HepG2 (cell line): ENCODE measurements at regions of chr9 and their contacts with region 1.

Region 1: GRCh38 chr9:16133556-16134227 is 580.8 kb downstream of the CCDC171 start:
- DNase-seq: peak; percentile 63
- ATAC-seq: peak; percentile 97
- H3K4me3 ChIP-seq: no peak overlapping the region
- H3K27ac ChIP-seq: no peak overlapping the region
- H3K4me1 ChIP-seq: no peaks in the 10 kb centered on the region
- H3K27me3 ChIP-seq: no peaks in the 10 kb centered on the region
- CTCF ChIP-seq: peak; percentile 82
- EP300 ChIP-seq: no peak
- POLR2A ChIP-seq: no peak
- RAD21 ChIP-seq: 0 out of 2 replicates have a peak, but pooled peaks have one; percentile 15

Region 2: DNA sequence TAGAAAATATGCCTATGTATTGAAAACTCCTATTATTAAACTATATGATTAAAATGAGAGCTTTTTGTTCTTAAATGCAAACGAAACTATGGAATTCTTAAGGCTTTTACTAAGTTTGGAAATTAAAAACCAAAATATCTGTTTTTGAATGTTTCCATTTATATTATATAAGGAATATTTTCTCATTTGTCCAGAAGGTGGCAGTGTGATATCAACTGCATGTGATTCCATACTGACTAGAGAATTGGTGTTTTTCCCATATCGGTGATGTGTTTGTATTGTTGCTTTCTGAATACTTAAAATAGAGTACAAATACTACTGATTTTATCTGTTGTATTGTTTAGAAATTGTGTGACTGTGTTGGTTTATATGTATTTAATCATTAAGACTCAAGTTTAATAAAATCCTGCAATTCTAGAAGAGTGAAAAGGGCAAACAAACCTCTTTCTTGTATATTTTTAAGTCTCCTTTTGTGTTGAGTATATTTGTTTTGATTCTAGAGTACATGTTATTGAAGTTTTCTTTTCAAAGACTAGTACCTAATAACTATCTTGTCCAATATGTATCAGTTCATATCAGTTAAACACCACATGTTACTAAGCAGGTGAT is 260.0 kb before region 1 on chr9:
- CTCF ChIA-PET with region 1: interaction called, 14 read pairs
- POLR2A ChIA-PET with region 1: no interaction called
- in situ Hi-C with region 1: loop called (anchors 25 kb)
- intact Hi-C with region 1: loop called (anchors 1 kb)
- DNase-seq: peak; percentile 33
- ATAC-seq: peak; percentile 59; the same call in 2 of the 3 replicates
- H3K4me3 ChIP-seq: no peak overlapping the region
- H3K27ac ChIP-seq: no peak overlapping the region
- H3K4me1 ChIP-seq: no peaks in the 10 kb centered on the region
- H3K27me3 ChIP-seq: no peaks in the 10 kb centered on the region
- CTCF ChIP-seq: peak; percentile 61
- EP300 ChIP-seq: no peak
- POLR2A ChIP-seq: no peak
- RAD21 ChIP-seq: no peak

Region 3: GRCh38 chr9:15889555-15889954 is 244.1 kb before region 1 on chr9:
- CTCF ChIA-PET with region 1: no interaction called
- POLR2A ChIA-PET with region 1: no interaction called
- in situ Hi-C with region 1: loop called (anchors 25 kb)
- intact Hi-C with region 1: no loop called
- DNase-seq: no peak
- ATAC-seq: no peak
- H3K4me3 ChIP-seq: no peak overlapping the region
- H3K27ac ChIP-seq: no peak overlapping the region
- H3K4me1 ChIP-seq: no peaks in the 10 kb centered on the region
- H3K27me3 ChIP-seq: no peaks in the 10 kb centered on the region
- CTCF ChIP-seq: no peak
- EP300 ChIP-seq: no peak
- POLR2A ChIP-seq: no peak
- RAD21 ChIP-seq: no peak

Region 4: DNA sequence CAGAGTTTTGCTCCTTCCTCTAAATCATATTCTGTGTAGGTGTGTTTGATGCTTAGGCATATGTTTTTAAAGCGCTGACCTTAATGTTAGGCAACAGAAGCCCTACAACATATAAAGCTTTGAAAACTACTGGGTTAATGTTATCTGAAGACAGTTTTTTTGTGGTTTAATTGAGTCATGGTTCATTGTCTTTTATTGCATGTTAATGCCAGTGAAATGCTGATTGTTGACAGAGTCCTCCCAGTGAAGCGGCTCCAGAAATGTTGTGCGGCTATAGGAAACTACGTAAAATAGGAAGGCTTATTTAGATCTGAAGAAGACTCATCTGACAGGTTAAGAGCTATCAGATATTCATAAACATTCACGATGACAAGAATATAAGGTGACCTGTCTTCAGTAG is 156.3 kb before region 1 on chr9:
- CTCF ChIA-PET with region 1: no interaction called
- POLR2A ChIA-PET with region 1: no interaction called
- in situ Hi-C with region 1: no loop called
- intact Hi-C with region 1: no loop called
- DNase-seq: no peak
- ATAC-seq: no peak
- H3K4me3 ChIP-seq: no peak overlapping the region
- H3K27ac ChIP-seq: no peak overlapping the region
- H3K4me1 ChIP-seq: no peaks in the 10 kb centered on the region
- H3K27me3 ChIP-seq: no peaks in the 10 kb centered on the region
- CTCF ChIP-seq: no peak
- EP300 ChIP-seq: no peak
- POLR2A ChIP-seq: no peak
- RAD21 ChIP-seq: no peak

Region 5: GRCh38 chr9:16002816-16003215 is 130.9 kb before region 1 on chr9:
- CTCF ChIA-PET with region 1: no interaction called
- POLR2A ChIA-PET with region 1: no interaction called
- in situ Hi-C with region 1: no loop called
- intact Hi-C with region 1: no loop called
- DNase-seq: no peak
- ATAC-seq: no peak
- H3K4me3 ChIP-seq: no peak overlapping the region
- H3K27ac ChIP-seq: no peak overlapping the region
- H3K4me1 ChIP-seq: no peaks in the 10 kb centered on the region
- H3K27me3 ChIP-seq: no peaks in the 10 kb centered on the region
- CTCF ChIP-seq: no peak
- EP300 ChIP-seq: no peak
- POLR2A ChIP-seq: no peak
- RAD21 ChIP-seq: no peak

Region 6: DNA sequence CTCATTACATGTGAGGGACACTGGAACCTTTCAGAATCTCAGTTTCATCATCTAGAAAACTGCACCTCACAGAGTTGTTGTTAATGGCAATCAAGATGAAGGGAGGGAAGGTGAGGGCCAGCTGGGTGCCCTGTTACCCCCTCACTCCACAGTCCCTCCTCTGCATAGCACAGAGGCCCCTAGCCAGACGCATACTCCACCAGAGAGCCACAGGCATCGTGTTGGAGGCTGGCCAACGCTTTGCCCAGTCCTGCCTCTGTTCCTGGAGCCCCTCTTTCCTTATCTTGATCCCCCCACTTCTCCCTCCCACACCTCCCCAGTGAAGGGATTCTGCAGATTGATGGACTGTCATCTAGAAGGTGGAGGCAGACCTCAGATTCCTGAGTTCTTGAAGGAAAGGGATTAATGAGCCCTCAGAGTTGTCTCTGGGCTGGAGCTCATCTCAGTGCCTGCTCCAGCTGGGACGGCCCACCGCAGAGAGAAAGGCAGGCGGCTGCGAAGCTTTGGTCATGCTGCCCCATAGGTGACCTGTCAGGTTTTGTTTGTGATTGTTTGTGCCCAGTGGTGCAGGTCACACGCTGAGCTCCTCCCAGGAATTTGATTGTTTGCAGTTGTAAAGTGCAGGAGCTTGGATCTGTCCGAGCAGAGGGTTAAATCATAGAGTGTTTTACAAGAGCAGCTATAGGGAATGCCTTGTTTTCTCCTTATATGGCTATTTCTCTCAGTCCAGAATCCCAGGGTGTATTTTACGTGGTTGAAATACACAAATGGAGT is 93.5 kb before region 1 on chr9:
- CTCF ChIA-PET with region 1: no interaction called
- POLR2A ChIA-PET with region 1: no interaction called
- in situ Hi-C with region 1: no loop called
- intact Hi-C with region 1: loop called (anchors 5 kb)
- DNase-seq: peak; percentile 9
- ATAC-seq: peak; percentile 73
- H3K4me3 ChIP-seq: no peak overlapping the region
- H3K27ac ChIP-seq: no peak overlapping the region
- H3K4me1 ChIP-seq: no peaks in the 10 kb centered on the region
- H3K27me3 ChIP-seq: no peaks in the 10 kb centered on the region; a peak in 1 of 5 replicates
- CTCF ChIP-seq: no peak
- EP300 ChIP-seq: no peak
- POLR2A ChIP-seq: no peak
- RAD21 ChIP-seq: no peak

Region 7: GRCh38 chr9:16475257-16475656 is 341.6 kb after region 1 on chr9:
- CTCF ChIA-PET with region 1: no interaction called
- POLR2A ChIA-PET with region 1: no interaction called
- in situ Hi-C with region 1: no loop called
- intact Hi-C with region 1: no loop called
- DNase-seq: no peak
- ATAC-seq: no peak
- H3K4me3 ChIP-seq: no peak overlapping the region
- H3K27ac ChIP-seq: no peak overlapping the region
- H3K4me1 ChIP-seq: no peaks in the 10 kb centered on the region
- H3K27me3 ChIP-seq: no peaks in the 10 kb centered on the region
- CTCF ChIP-seq: no peak
- EP300 ChIP-seq: no peak
- POLR2A ChIP-seq: no peak
- RAD21 ChIP-seq: no peak